Activated CD4-positive, alpha-beta T cell treated with anti-CD3 and anti-CD28 coated beads, Interleukin-2, amount 10 ng/mL, durations not matched to agents 24 days and 14 days (primary cell): ENCODE measurements at regions of chr11 and their contacts with region 1.

Region 1: DNA sequence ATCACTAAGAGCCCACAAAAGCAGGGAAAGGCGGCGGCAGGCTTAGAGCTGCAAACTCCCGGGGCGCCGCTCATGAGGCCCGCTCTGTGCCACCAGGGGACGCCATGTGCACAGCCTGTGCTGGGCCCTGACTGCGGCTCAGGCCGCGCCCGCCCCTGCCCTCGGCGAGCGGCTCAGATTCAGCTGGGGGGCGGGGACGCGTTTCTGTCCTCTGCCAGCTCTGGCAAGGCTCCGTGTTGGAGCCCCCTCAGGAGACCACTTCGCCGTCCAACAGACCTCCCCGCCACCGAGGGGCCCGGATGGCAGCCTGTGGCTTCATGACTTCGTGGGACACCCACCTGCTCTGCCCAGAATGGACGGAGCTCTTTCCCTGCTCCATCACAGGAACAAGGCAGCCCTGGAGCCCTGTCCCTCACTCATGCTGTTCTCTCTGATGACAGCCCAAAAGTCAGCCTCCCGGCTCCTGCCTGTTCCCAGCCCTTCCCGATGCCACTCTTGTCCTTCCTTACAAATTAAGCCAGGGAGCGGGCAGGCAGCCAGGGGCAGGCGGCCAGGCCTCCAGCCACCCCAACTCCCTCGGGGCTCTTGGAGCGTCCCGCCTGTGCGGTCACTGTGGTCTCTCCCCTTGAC is 69.1 kb downstream of the NAT10 start:
- DNase-seq: peak; percentile 95
- H3K4me3 Mint-ChIP-seq: peak overlapping the region; percentile 79
- H3K27ac Mint-ChIP-seq: peak overlapping the region; percentile 53
- H3K4me1 Mint-ChIP-seq: peaks cover 17% of the 10 kb centered on the region
- H3K27me3 Mint-ChIP-seq: peaks cover 7% of the 10 kb centered on the region

Region 2: GRCh38 chr11:33996498-33997454 is 177.8 kb before region 1 on chr11:
- intact Hi-C with region 1: loop called (anchors 2 kb)
- DNase-seq: peak; percentile 93
- H3K4me3 Mint-ChIP-seq: peak overlapping the region; percentile 30
- H3K27ac Mint-ChIP-seq: no peak overlapping the region
- H3K4me1 Mint-ChIP-seq: peaks cover 8% of the 10 kb centered on the region
- H3K27me3 Mint-ChIP-seq: peaks cover 29% of the 10 kb centered on the region

Region 3: DNA sequence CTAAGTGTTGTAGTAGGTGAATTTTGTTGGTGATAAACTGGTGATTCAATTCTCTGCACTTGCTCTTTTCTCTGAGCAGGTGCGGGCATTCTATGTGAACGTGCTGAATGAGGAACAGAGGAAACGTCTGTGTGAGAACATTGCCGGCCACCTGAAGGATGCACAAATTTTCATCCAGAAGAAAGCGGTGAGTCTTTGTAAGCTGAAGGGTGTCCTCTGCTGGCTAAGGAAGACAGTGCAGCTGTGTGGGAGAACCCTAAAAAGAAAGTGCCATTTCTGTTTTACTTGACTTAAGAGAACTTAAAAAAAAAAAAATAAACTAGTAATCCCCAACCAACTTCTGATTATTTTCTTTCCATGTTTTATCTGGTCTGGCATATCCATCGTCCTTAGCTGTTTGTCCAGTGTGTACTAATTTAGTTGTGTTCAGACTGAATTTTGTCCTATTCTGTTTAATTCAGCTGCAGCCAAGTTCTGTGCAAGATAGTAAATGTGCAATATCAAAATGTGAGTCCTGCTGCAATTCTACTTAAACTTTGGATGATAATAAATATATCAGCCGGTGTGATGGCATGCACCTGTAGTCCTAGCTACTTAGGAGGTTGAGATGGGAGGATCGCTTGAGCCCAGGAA is 293.8 kb after region 1 on chr11:
- intact Hi-C with region 1: loop called (anchors 10 kb)
- DNase-seq: peak; percentile 82
- H3K4me3 Mint-ChIP-seq: no peak overlapping the region
- H3K27ac Mint-ChIP-seq: no peak overlapping the region
- H3K4me1 Mint-ChIP-seq: peaks cover 11% of the 10 kb centered on the region
- H3K27me3 Mint-ChIP-seq: no peaks in the 10 kb centered on the region